Gastrocnemius medialis (tissue), 4 donors: ENCODE measurements at regions of chr6 and their contacts with region 1.

Region 1: GRCh38 chr6:80282913-80283554 is 176.6 kb downstream of the BCKDHB start:
- DNase-seq: no peak
- ATAC-seq: no peak
- H3K4me3 ChIP-seq: no peak overlapping the region
- H3K27ac ChIP-seq: no peak overlapping the region
- H3K4me1 ChIP-seq: no peaks in the 10 kb centered on the region
- H3K27me3 ChIP-seq: no peaks in the 10 kb centered on the region
- CTCF ChIP-seq: no peak
- POLR2A ChIP-seq: no peak

Region 2: DNA sequence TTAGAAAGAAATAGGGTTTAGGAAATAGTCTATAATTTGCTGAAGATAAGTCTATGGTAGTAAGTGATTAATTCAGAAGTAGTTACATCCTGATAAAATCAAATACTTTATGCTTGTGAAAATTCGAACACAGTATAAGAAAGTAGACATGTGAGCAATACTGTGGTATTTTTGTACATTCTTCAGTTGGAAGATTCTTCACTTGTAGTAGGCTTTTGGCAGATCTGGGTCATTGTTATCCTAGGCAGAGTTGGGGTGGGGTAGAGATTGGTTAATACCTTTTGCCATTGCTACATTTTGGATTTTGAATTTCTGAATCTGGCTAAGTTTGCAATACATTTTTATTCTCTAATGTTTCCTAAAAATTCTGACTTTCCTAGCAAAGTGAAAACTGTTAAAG is 21.0 kb after region 1 on chr6:
- in situ Hi-C with region 1: no loop called
- intact Hi-C with region 1: loop called (anchors 1 kb)
- DNase-seq: no peak
- ATAC-seq: no peak
- H3K4me3 ChIP-seq: no peak overlapping the region
- H3K27ac ChIP-seq: no peak overlapping the region
- H3K4me1 ChIP-seq: no peaks in the 10 kb centered on the region
- H3K27me3 ChIP-seq: no peaks in the 10 kb centered on the region
- CTCF ChIP-seq: no peak
- POLR2A ChIP-seq: no peak